Posterior vena cava (tissue), 2 donors: ENCODE measurements at regions of chr16 and their contacts with region 1.

Region 1: GRCh38 chr16:70380861-70381603 is 34.3 kb downstream of the DDX19A start:
- DNase-seq: peak; percentile 98

Region 2: GRCh38 chr16:70407811-70408274 is 26.8 kb after region 1 on chr16:
- intact Hi-C with region 1: no loop called
- DNase-seq: no peak

Region 3: DNA sequence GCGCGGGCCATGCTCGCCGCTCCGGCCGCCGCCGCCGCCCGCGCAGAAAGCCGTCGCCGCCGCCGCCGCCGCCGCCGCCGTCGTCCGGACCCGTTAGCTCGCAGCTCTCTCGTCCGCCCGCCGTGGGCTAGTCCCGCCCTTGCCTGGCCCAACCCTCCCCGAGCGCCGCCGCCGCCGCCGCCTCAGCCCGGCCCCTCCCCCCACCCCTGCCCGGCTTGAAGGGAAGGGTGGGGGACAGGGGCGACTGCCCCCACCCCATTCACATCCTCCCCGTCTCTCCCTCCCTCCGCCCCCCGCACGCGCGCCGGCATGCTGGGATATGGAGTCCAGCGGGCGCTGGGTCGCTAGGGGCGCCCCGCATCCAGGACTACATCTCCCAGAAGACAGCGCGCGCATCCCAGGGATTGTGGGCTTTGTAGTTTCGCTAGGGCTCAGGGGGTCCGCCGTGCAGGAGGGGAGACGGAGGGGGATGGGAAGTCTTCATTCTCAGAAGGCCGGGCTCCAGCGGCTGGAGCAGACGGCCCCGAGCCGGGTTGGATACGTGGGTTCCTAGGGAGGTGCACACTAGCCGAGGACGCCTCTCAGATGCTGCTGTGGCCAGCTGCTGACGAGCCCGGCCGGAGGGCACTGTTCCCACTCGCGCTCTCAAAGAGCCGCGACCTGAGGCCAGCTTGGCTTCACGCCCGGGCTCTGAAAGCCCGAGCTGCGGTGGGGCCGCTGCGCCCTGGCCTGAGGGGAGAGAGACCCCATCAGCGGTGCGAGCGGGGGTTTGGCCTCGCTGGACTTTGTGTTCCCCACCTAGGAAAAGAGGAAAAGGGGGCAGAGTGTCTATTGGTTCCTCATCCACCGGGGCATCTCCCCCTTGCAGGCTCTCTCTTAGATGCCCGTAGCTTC is 58.2 kb after region 1 on chr16 and contains the start of gene ST3GAL2:
- intact Hi-C with region 1: loop called in 1 of 2 experiments (anchors 5 kb)
- DNase-seq: peak; percentile 97
- total RNA-seq, gene ST3GAL2: 27.7 to 29.4 TPM